B cell (primary cell): ENCODE measurements at regions of chr4 and their contacts with region 1.

Region 1: GRCh38 chr4:38675146-38676121 is 11.4 kb downstream of the KLF3 start:
- DNase-seq: peak; percentile 87
- ATAC-seq: peak; percentile 73
- H3K4me3 ChIP-seq: no peak overlapping the region
- H3K4me3 Mint-ChIP-seq: peak overlapping the region; percentile 33
- H3K27ac ChIP-seq: peak overlapping the region in 1 of 2 donors; percentile 73
- H3K27ac Mint-ChIP-seq: peak overlapping the region; percentile 59
- H3K4me1 ChIP-seq: peaks cover 55 to 59% of the 10 kb centered on the region in 2 donors
- H3K4me1 Mint-ChIP-seq: peaks cover 78% of the 10 kb centered on the region
- H3K27me3 ChIP-seq: no peaks in the 10 kb centered on the region
- H3K27me3 Mint-ChIP-seq: no peaks in the 10 kb centered on the region
- CTCF ChIP-seq: peak; percentile 93

Region 2: DNA sequence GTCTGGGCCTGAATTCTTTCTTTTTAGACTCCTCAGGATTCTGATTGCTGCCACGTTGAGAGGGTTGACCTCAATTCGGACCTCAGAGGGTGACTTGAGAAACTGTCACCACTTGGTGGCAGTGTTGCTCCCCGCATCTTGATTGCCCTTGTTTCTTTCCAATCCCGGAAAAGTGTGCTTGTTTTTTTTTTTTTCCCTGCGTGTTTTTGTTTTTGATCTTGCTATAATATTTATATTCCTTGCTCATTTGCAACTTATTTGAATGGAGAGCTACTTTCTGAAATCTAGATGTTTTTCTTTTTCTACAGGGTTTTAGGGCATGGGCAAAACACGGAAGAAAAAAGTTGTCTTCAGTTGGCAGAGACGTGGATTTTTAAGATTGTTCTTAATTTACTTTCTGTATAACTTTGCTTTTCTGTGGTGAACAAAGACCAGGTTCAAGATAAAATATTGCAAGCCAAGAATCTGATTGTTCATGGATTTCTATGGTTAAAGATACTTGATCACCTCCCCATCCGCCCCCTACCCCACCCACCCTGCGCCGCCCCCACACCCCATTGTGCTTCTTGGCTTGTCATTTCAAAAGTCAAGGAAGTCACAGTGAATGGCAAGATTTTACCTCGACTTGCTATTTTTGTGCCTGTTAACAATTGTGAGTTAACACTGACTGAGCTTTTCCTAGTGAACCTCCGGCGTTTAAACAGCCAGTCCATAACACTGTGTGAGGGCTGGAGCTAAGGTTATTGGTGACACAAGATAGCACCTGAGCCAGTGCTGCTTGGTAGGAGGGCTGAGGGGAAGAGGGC is 613.1 kb before region 1 on chr4:
- CTCF ChIA-PET with region 1: interaction called, 19 read pairs
- POLR2A ChIA-PET with region 1: no interaction called
- intact Hi-C with region 1: loop called (anchors 1 kb)
- DNase-seq: peak; percentile 65
- ATAC-seq: peak; percentile 62
- H3K4me3 ChIP-seq: no peak overlapping the region
- H3K4me3 Mint-ChIP-seq: peak overlapping the region; percentile 51
- H3K27ac ChIP-seq: no peak overlapping the region
- H3K27ac Mint-ChIP-seq: peak overlapping the region; percentile 42
- H3K4me1 ChIP-seq: peaks cover 0 to 5% of the 10 kb centered on the region in 2 donors
- H3K4me1 Mint-ChIP-seq: peaks cover 15% of the 10 kb centered on the region
- H3K27me3 ChIP-seq: no peaks in the 10 kb centered on the region
- H3K27me3 Mint-ChIP-seq: no peaks in the 10 kb centered on the region
- CTCF ChIP-seq: peak; percentile 93

Region 3: DNA sequence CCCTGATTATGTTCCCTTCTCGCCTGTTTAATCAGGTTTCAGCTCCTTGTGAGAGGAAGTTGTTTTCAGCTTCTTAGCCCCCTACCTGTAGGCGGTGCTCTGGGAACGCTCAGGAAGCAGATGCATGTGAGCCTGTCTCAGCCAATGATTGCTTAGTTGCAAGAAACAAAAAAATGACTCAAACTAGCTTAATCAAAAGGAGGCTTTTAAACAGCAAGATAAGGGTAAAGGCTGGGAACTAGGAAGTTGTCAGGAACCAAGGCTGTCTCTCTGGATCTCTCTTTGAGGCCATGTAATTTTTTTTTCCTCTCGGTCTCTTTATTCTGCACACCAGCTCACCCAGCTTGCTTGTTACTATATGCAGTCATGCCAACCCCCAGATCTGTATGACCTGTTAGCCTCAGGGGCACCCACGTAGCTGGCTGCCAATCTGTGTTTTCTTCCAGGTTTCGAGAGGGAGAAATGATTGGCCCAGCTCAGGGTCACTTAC is 606.1 kb before region 1 on chr4:
- CTCF ChIA-PET with region 1: interaction called, 14 read pairs
- POLR2A ChIA-PET with region 1: no interaction called
- intact Hi-C with region 1: no loop called
- DNase-seq: peak; percentile 30
- ATAC-seq: no peak
- H3K4me3 ChIP-seq: no peak overlapping the region
- H3K4me3 Mint-ChIP-seq: no peak overlapping the region
- H3K27ac ChIP-seq: no peak overlapping the region
- H3K27ac Mint-ChIP-seq: no peak overlapping the region
- H3K4me1 ChIP-seq: peaks cover 0 to 12% of the 10 kb centered on the region in 2 donors
- H3K4me1 Mint-ChIP-seq: peaks cover 24% of the 10 kb centered on the region
- H3K27me3 ChIP-seq: no peaks in the 10 kb centered on the region
- H3K27me3 Mint-ChIP-seq: no peaks in the 10 kb centered on the region
- CTCF ChIP-seq: no peak

Region 4: GRCh38 chr4:38691251-38692008 is 16.0 kb after region 1 on chr4:
- CTCF ChIA-PET with region 1: interaction called, 14 read pairs
- POLR2A ChIA-PET with region 1: no interaction called
- intact Hi-C with region 1: no loop called
- DNase-seq: no peak
- ATAC-seq: no peak
- H3K4me3 ChIP-seq: no peak overlapping the region
- H3K4me3 Mint-ChIP-seq: no peak overlapping the region
- H3K27ac ChIP-seq: no peak overlapping the region
- H3K27ac Mint-ChIP-seq: no peak overlapping the region
- H3K4me1 ChIP-seq: no peaks in the 10 kb centered on the region
- H3K4me1 Mint-ChIP-seq: no peaks in the 10 kb centered on the region
- H3K27me3 ChIP-seq: no peaks in the 10 kb centered on the region
- H3K27me3 Mint-ChIP-seq: no peaks in the 10 kb centered on the region
- CTCF ChIP-seq: no peak

Region 5: DNA sequence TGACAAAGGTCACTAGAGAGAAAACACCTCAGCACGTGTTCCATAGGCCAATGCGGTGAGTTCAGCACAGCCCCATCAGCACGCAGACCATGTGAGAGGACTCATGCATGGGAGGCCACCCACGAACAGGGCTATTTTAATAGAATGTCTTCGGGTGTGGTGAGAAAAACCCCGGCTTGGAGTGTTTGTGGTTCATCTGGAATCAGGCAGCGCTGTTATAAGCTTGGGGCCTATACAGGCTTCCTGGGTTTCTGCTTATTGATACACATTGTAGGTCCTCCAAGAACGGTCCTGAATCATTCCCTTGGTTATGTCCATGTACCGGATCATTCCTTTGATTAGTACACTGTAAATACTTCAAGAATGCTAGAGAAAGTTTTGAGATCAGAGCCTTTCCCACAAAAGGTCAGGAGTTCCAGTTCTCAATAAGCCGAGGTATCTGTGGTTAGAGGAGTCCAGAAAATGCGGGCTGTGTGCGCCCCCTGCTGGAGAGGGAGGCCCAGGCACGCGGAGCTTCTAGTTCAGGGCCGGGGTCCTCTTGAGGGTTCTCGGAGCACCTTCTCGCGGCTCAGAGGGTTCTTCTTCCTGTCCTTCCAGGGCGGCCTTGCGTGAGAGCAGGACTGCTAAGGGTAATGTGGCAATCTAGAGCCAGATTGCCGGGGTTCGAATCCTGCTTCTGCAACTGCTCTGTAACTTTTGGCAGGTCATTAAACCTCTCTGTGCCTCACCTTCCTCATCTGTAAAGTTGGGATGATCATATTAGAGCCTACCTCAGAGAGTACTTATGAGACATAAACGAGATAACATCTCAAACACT is 55.6 kb after region 1 on chr4:
- CTCF ChIA-PET with region 1: interaction called, 14 read pairs
- POLR2A ChIA-PET with region 1: no interaction called
- intact Hi-C with region 1: loop called (anchors 1 kb)
- DNase-seq: peak; percentile 88
- ATAC-seq: peak; percentile 83
- H3K4me3 ChIP-seq: peak overlapping the region in 1 of 5 experiments; percentile 10
- H3K4me3 Mint-ChIP-seq: peak overlapping the region; percentile 69
- H3K27ac ChIP-seq: peak overlapping the region; percentile 32 to 40
- H3K27ac Mint-ChIP-seq: peak overlapping the region; percentile 75
- H3K4me1 ChIP-seq: peaks cover 13 to 27% of the 10 kb centered on the region in 2 donors
- H3K4me1 Mint-ChIP-seq: peaks cover 33% of the 10 kb centered on the region
- H3K27me3 ChIP-seq: no peaks in the 10 kb centered on the region
- H3K27me3 Mint-ChIP-seq: no peaks in the 10 kb centered on the region
- CTCF ChIP-seq: peak; percentile 92